HepG2 (cell line): ENCODE measurements at regions of chrX and their contacts with region 1.

Region 1: DNA sequence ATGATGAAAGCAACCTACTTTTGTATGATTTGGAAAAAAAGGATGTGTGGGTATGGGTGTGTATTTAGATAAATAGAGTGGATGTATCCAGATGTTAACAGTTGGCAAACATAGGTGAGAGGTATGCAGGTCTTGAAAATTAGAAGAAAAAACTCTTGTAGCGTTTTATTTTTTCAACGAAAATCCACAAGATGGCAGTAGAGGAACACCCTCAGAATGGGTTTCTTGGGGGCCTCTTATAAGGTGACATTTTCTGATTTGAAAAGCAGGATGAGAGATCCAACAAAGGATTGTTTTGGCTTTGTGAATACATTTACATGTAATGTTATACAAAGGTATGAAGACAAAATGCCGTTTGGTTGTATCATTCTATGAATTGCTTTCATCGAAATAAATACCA is 68.3 kb downstream of the FMR1NB start:
- DNase-seq: peak; percentile 22
- ATAC-seq: no peak
- H3K4me3 ChIP-seq: no peak overlapping the region
- H3K27ac ChIP-seq: no peak overlapping the region
- H3K4me1 ChIP-seq: no peaks in the 10 kb centered on the region
- H3K27me3 ChIP-seq: no peaks in the 10 kb centered on the region; a peak in 1 of 5 replicates
- CTCF ChIP-seq: peak; percentile 39; the same call in 1 of the 2 replicates
- EP300 ChIP-seq: no peak
- POLR2A ChIP-seq: no peak
- RAD21 ChIP-seq: no peak

Region 2: GRCh38 chrX:148084611-148085010 is 35.2 kb after region 1 on chrX:
- CTCF ChIA-PET with region 1: no interaction called
- POLR2A ChIA-PET with region 1: no interaction called
- in situ Hi-C with region 1: no loop called
- intact Hi-C with region 1: no loop called
- DNase-seq: no peak
- ATAC-seq: no peak
- H3K4me3 ChIP-seq: no peak overlapping the region
- H3K27ac ChIP-seq: no peak overlapping the region
- H3K4me1 ChIP-seq: no peaks in the 10 kb centered on the region
- H3K27me3 ChIP-seq: no peaks in the 10 kb centered on the region
- CTCF ChIP-seq: no peak
- EP300 ChIP-seq: no peak
- POLR2A ChIP-seq: no peak
- RAD21 ChIP-seq: no peak

Region 3: GRCh38 chrX:148290931-148291330 is 241.5 kb after region 1 on chrX:
- CTCF ChIA-PET with region 1: no interaction called
- POLR2A ChIA-PET with region 1: no interaction called
- in situ Hi-C with region 1: no loop called
- intact Hi-C with region 1: no loop called
- DNase-seq: no peak
- ATAC-seq: no peak
- H3K4me3 ChIP-seq: no peak overlapping the region
- H3K27ac ChIP-seq: no peak overlapping the region
- H3K4me1 ChIP-seq: no peaks in the 10 kb centered on the region
- H3K27me3 ChIP-seq: no peaks in the 10 kb centered on the region
- CTCF ChIP-seq: no peak
- EP300 ChIP-seq: no peak
- POLR2A ChIP-seq: no peak
- RAD21 ChIP-seq: no peak

Region 4: DNA sequence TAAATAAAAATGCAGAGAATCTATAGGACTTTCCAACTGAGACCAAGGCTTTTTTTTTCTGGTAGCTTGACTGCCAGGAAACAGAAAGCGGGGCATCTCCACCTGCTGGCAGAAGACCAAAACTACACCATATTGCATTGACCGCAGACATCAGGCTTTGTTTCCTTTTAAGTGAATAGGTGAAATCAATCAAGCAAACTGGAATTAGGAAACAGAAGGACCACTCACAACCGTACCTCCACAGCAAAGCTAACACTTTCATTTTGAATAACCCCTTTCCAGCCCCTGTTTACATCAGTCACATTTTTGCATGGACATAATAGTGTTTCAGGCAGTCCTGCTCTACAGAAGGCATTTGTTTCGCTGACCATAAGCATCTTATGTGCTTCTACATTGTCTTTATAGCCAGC is 1237.5 kb after region 1 on chrX:
- CTCF ChIA-PET with region 1: interaction called, 11 read pairs
- POLR2A ChIA-PET with region 1: no interaction called
- in situ Hi-C with region 1: loop called (anchors 25 kb)
- intact Hi-C with region 1: no loop called
- DNase-seq: peak; percentile 11
- ATAC-seq: peak; percentile 41; the same call in 1 of the 3 replicates
- H3K4me3 ChIP-seq: no peak overlapping the region
- H3K27ac ChIP-seq: no peak overlapping the region
- H3K4me1 ChIP-seq: no peaks in the 10 kb centered on the region
- H3K27me3 ChIP-seq: no peaks in the 10 kb centered on the region
- CTCF ChIP-seq: peak; percentile 61
- EP300 ChIP-seq: no peak
- POLR2A ChIP-seq: no peak
- RAD21 ChIP-seq: no peak

Region 5: DNA sequence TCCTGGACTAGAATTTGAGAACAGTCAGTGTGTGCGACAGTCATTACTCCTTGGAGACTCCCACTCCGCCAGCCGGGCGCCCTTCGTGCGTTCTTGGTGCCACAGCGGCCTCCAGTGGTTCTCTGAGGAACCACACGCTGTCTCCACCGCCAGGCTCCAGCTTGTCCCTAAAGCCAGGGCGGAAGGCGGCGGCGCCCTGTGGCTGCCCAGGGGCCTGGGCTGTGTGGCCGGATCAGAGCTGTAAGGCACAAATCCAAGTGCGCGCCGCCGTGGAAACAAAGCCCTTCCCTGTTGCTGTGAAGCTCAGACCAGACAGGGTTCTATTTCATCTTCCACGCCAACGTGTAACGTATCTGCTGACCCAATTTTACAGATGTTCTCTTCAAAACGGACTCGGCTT is 1421.5 kb after region 1 on chrX:
- CTCF ChIA-PET with region 1: interaction called, 6 read pairs
- POLR2A ChIA-PET with region 1: no interaction called
- in situ Hi-C with region 1: no loop called
- intact Hi-C with region 1: loop called (anchors 2 kb)
- DNase-seq: peak; percentile 16
- ATAC-seq: peak; percentile 99
- H3K4me3 ChIP-seq: no peak overlapping the region
- H3K27ac ChIP-seq: no peak overlapping the region
- H3K4me1 ChIP-seq: no peaks in the 10 kb centered on the region
- H3K27me3 ChIP-seq: no peaks in the 10 kb centered on the region
- CTCF ChIP-seq: peak; percentile 89
- EP300 ChIP-seq: no peak
- POLR2A ChIP-seq: no peak
- RAD21 ChIP-seq: peak; percentile 77